ENCODE measurements at regions of chr1 and their contacts with region 1.

Region 1: DNA sequence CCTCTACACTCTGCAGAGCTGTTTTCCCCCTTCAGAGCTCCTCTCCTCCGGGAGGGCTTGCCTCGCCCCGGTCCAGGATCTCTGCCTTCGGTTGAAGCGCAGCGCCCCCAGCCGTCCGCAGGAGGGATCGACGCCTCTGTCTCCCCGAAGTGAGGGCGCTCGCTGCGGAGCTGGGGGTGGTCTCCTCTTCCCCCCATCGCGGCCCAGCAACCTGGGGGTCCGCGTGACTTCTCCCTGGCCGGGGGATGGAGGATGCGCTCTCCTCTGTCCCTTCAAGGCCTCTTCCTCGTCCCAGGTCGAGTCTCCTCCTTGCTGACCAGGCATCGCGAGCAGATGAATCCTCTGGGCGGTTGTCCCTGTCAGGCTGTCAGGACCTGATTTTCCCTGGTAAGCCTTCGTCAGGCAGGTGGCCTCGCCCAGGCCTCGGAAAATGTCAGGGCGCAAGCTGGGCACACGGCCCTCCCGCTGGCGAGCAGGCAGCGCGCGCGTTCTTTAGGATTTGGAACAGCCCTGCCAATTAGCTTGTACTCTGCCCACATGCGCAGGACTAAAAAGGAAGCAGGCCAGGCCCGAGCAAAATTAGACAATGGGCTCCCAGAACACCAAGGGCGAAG is 90.5 kb downstream of the EDEM3 start:
- DNase-seq: peak in 1 of 2 experiments; percentile 49
- H3K4me3 ChIP-seq: no peak overlapping the region
- H3K27ac ChIP-seq: no peak overlapping the region
- H3K4me1 ChIP-seq: no peaks in the 10 kb centered on the region
- H3K27me3 ChIP-seq: no peaks in the 10 kb centered on the region
- CTCF ChIP-seq: peak; percentile 80

Region 2: DNA sequence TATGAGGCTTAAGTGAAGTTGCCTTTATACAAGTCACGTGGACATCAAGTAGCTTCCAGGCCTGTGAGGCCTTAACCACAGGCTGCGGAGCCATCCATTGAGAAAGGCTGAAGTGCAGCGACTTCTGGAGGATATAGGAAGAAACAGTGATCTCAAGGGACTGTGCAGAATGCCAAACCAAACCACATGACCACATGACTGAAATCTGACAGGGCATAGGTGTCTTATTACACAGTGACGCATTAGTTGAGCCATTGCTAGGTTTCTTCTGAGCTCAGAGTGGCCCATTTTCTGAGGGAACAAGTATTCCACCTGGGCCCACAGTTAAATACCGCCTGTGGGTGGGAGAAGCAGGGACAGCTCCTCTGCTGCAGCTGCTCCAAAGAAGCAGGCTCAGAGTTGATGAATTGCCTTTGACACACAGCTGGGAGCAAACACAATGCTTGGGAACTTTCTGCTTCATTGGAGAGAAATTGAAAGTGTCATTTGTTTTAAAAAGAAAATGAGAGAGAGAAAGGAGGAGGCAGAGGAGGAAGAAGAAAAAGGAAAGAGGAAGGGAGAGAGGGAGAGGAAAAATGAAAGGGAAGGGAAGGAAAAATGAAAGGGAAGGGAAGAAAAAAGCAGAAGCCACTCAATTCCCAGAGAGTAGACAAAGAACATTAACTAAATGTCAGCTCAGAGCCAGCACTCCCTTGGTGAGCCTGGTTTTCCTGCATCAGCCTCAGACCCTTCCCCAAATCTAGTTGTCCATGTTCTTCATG is 721.0 kb before region 1 on chr1:
- CTCF ChIA-PET with region 1: no interaction called
- POLR2A ChIA-PET with region 1: interaction called, 15 read pairs
- intact Hi-C with region 1: no loop called
- DNase-seq: peak; percentile 57 to 67
- H3K4me3 ChIP-seq: no peak overlapping the region
- H3K27ac ChIP-seq: no peak overlapping the region
- H3K4me1 ChIP-seq: peaks cover 8% of the 10 kb centered on the region
- H3K27me3 ChIP-seq: no peaks in the 10 kb centered on the region
- CTCF ChIP-seq: no peak

Region 3: GRCh38 chr1:184075055-184076029 is 588.8 kb before region 1 on chr1:
- CTCF ChIA-PET with region 1: interaction called, 5 read pairs
- POLR2A ChIA-PET with region 1: interaction called, 4 read pairs
- intact Hi-C with region 1: loop called (anchors 1 kb)
- DNase-seq: peak; percentile 15 to 43
- H3K4me3 ChIP-seq: no peak overlapping the region
- H3K27ac ChIP-seq: no peak overlapping the region
- H3K4me1 ChIP-seq: no peaks in the 10 kb centered on the region
- H3K27me3 ChIP-seq: no peaks in the 10 kb centered on the region
- CTCF ChIP-seq: peak; percentile 85

Region 4: GRCh38 chr1:184272175-184272866 is 391.8 kb before region 1 on chr1:
- CTCF ChIA-PET with region 1: no interaction called
- POLR2A ChIA-PET with region 1: interaction called, 13 read pairs
- intact Hi-C with region 1: no loop called
- DNase-seq: no peak
- H3K4me3 ChIP-seq: no peak overlapping the region
- H3K27ac ChIP-seq: no peak overlapping the region
- H3K4me1 ChIP-seq: no peaks in the 10 kb centered on the region
- H3K27me3 ChIP-seq: no peaks in the 10 kb centered on the region
- CTCF ChIP-seq: no peak

Region 5: GRCh38 chr1:184563308-184563707 is 100.8 kb before region 1 on chr1:
- CTCF ChIA-PET with region 1: interaction called, 5 read pairs
- POLR2A ChIA-PET with region 1: no interaction called
- intact Hi-C with region 1: loop called (anchors 10 kb)
- DNase-seq: no peak
- H3K4me3 ChIP-seq: no peak overlapping the region
- H3K27ac ChIP-seq: no peak overlapping the region
- H3K4me1 ChIP-seq: no peaks in the 10 kb centered on the region
- H3K27me3 ChIP-seq: no peaks in the 10 kb centered on the region
- CTCF ChIP-seq: peak; percentile 60

Region 6: DNA sequence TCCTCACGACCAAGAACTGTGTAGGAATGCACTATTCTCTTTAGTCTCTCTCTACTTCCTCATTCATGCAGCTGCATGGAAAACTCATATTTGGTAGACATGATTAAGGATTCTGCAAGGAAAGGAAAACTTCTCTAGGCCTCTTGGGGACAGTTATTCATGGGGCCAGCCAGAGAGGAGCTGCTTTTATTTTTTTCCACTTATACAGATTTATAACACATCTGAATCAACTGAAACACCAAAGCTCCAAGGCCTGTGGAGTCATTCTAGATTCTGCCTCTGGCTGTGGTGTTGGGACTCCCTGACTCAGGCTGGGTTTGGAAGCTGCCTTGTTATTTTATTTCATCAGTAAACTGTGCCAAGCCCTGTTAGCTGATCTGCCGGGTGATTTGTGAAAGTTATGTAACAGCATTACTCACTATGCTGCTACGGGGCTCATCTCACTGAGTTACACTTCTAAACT is 174.4 kb after region 1 on chr1:
- CTCF ChIA-PET with region 1: no interaction called
- POLR2A ChIA-PET with region 1: no interaction called
- intact Hi-C with region 1: no loop called
- DNase-seq: peak; percentile 51 to 89
- H3K4me3 ChIP-seq: no peak overlapping the region
- H3K27ac ChIP-seq: peak overlapping the region; percentile 48
- H3K4me1 ChIP-seq: peaks cover 23% of the 10 kb centered on the region
- H3K27me3 ChIP-seq: no peaks in the 10 kb centered on the region
- CTCF ChIP-seq: no peak

Measured in PC-9 (cell line).